Transverse colon (tissue), 4 donors: ENCODE measurements at regions of chr13 and their contacts with region 1.

Region 1: DNA sequence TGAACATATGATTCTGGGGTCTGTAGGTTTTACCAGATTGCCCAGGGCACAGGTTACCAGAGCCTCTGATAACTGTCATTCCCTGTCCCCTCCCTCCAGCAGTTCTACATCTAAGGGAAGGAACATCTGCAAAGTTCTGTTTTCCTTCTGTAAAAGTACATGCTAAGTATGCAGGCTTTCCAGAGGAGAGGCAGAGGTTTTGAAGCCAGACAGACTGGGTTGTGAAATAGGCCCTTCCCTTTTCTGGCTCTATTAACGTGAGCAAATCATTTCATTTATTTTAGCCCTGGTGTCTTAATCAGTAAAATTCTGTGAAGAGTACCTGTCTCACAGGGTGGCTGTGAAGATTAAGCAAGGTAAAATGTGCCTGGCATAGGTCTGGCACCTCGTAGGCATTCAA is 66.1 kb upstream of the C1QTNF9 start:
- DNase-seq: no peak
- H3K4me3 ChIP-seq: no peak overlapping the region
- H3K27ac ChIP-seq: peak overlapping the region in 1 of 4 donors; percentile 3
- H3K4me1 ChIP-seq: peaks cover 0 to 67% (median 32%) of the 10 kb centered on the region in 4 donors
- H3K27me3 ChIP-seq: no peaks in the 10 kb centered on the region
- CTCF ChIP-seq: no peak
- EP300 ChIP-seq: no peak
- POLR2A ChIP-seq: no peak

Region 2: GRCh38 chr13:24178847-24179485 is 64.3 kb before region 1 on chr13:
- in situ Hi-C with region 1: no loop called
- intact Hi-C with region 1: loop called (anchors 2 kb)
- DNase-seq: no peak
- H3K4me3 ChIP-seq: no peak overlapping the region
- H3K27ac ChIP-seq: no peak overlapping the region
- H3K4me1 ChIP-seq: peaks cover 6 to 49% (median 22%) of the 10 kb centered on the region in 4 donors
- H3K27me3 ChIP-seq: no peaks in the 10 kb centered on the region
- CTCF ChIP-seq: no peak
- EP300 ChIP-seq: no peak
- POLR2A ChIP-seq: no peak

Region 3: GRCh38 chr13:24270639-24271141 is 27.4 kb after region 1 on chr13:
- in situ Hi-C with region 1: no loop called
- intact Hi-C with region 1: no loop called
- DNase-seq: peak; percentile 62
- H3K4me3 ChIP-seq: peak overlapping the region in 3 of 4 donors; percentile 7 to 44 (median 22)
- H3K27ac ChIP-seq: peak overlapping the region; percentile 88 to 94 (median 92)
- H3K4me1 ChIP-seq: peaks cover 32 to 57% (median 34%) of the 10 kb centered on the region in 4 donors
- H3K27me3 ChIP-seq: no peaks in the 10 kb centered on the region
- CTCF ChIP-seq: peak in 3 of 5 experiments; percentile 55 to 76 (median 59)
- EP300 ChIP-seq: no peak
- POLR2A ChIP-seq: peak; percentile 36